Activated B cell treated with CpG ODN at 0.5 μM for 24 hours (primary cell): ENCODE measurements at regions of chr13 and their contacts with region 1.

Region 1: DNA sequence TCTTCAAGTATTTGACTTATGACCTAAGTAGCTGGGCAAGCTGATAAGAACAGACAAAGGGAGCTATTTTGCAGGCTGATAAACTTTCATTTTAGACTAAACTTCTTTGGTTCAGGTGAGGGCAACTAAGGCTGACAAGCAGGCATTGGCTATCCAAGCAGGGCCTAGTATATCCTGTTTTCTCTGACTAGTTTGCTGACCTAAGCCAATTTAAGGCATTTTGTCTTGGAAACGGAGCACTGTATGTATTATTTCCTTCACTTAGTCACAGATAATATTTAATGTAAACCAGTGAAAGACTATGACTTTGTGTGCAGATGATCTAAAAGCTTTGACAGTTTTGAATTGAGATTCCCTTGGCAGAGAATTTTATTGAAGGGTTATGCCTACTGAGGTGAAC is 172.5 kb downstream of the POU4F1 start:
- DNase-seq: no peak
- ATAC-seq: no peak
- H3K4me3 Mint-ChIP-seq: no peak overlapping the region
- H3K27ac Mint-ChIP-seq: no peak overlapping the region
- H3K4me1 Mint-ChIP-seq: no peaks in the 10 kb centered on the region
- H3K27me3 Mint-ChIP-seq: peaks cover 3% of the 10 kb centered on the region
- CTCF ChIP-seq: no peak

Region 2: DNA sequence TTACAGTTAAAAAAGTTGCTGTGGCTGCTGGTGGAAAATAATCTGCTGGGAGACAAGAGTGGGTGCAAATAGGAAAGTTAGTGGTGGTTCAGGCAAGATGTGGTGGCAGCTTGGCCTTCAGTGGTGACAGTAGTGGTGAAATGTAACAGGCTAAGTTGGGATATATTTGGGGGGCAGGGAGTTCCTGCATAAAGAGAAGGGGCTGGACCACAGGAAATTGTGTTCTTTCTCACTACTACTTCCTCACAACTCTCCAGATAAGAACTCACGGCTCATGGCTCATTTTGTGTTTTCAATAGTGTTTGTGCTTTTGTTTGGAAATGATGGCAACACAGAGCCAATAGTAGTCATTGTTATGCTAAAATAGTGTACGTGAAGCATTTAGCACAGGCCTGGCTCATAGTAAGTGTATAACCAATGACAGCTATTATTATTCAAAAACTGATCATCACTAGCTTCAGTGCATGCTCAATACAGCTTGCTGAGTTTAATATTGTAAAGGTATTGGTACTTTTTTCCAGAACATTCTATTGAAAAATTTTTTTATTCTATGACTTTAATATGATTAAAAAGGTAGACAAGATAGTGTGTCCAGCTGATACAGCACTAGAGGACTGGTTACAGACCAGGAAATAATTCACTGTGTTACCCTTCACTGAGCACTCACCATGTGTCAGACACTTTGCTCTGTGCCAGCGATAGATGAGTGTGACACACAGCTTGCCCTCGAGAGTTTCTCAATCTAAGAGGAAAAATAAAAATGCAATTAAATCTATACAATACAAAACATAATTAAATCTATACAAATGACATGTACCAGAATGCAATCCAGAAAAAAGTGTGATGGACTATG is 37.3 kb before region 1 on chr13:
- CTCF ChIA-PET with region 1: no interaction called
- POLR2A ChIA-PET with region 1: no interaction called
- intact Hi-C with region 1: loop called (anchors 1 kb)
- DNase-seq: no peak
- ATAC-seq: no peak
- H3K4me3 Mint-ChIP-seq: no peak overlapping the region
- H3K27ac Mint-ChIP-seq: no peak overlapping the region
- H3K4me1 Mint-ChIP-seq: no peaks in the 10 kb centered on the region
- H3K27me3 Mint-ChIP-seq: no peaks in the 10 kb centered on the region
- CTCF ChIP-seq: no peak

Region 3: GRCh38 chr13:78852709-78853108 is 421.9 kb after region 1 on chr13:
- CTCF ChIA-PET with region 1: no interaction called
- POLR2A ChIA-PET with region 1: no interaction called
- intact Hi-C with region 1: no loop called
- DNase-seq: no peak
- ATAC-seq: no peak
- H3K4me3 Mint-ChIP-seq: no peak overlapping the region
- H3K27ac Mint-ChIP-seq: no peak overlapping the region
- H3K4me1 Mint-ChIP-seq: no peaks in the 10 kb centered on the region
- H3K27me3 Mint-ChIP-seq: peaks cover 4% of the 10 kb centered on the region
- CTCF ChIP-seq: no peak